ENCODE measurements at regions of chr1 and their contacts with region 1.

Region 1: GRCh38 chr1:25695090-25695770 is 78.6 kb downstream of the MAN1C1 start:
- DNase-seq: peak; percentile 88
- ATAC-seq: peak; percentile 89

Region 2: DNA sequence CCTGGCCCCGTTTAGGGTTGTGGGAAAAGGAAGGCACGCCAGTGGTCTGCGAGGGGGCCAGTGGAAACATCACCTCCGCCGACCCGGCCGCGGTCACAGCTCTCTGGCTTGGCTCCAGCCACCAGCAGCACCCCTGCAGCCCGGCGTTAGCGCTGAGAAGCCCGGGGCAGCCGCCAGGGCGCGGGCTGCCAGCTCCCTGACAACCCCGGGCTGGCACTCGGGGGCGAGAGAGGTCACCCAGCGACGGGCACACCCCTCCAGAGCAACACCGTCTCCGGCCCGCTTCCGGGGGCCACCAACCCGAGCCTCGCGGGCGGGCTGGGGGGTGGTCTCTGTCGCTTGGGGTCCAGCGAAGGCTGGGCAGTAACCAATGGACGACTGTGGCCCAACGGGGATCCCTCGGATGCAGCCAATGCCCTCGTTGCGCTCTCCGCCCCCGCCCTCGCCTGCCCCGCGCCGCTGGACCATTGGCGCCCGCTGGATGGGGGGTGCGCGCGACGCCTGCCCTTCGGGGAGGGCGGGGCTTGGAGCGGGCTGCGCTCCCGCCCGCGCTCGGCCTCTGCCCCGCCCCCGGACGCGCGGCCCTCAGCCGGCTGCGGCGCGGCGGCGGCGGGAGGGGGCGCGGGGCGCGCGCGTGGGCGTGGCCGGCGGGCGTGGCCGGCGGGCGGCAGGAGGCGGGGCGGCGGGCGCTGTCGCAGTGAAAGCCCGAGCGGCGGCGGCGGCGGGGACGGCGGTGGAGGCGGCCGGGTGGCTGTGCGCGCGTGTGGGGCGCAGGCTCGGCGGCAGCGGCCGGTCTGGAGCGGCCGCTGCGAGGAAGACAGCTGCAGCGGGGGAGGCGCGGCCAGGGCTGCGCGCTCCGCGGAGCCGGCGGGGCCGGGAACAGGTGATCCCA is 78.9 kb before region 1 on chr1 and contains the start of gene MAN1C1:
- intact Hi-C with region 1: loop called (anchors 1 kb)
- DNase-seq: peak; percentile 94
- ATAC-seq: peak; percentile 93
- total RNA-seq, gene MAN1C1: 19.5 TPM

Region 3: DNA sequence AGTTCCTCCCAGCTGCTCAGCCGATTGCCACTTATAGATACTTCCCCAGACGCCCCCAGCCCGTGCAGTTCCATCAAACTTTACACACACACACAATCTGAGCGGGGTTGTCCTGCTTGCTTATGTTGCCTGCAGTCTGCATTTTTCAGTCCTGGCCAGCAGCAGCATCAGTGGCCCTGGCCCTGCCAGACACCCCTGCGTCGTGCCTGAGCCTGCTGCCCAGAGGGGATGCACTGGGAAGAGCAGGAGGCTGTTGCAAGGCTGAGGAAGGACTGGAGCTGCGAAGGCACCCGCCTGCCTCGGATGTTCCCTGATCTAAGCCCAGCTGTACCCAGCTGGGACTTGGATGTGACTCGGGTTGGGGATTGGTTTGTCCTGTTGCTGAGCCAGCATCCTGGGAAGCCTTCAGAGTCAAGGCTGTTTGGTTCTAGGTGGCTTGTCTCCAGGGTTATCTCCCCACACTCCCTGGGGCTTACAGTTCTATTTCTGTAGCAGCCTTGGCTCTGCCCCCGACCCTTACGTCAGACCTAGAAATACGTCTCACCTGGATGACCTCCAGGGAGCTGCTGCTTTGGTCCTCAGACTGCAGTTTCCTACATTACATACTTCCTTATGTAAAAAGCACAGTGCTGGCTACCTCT is 36.3 kb before region 1 on chr1:
- intact Hi-C with region 1: loop called (anchors 5 kb)
- DNase-seq: peak; percentile 81
- ATAC-seq: peak; percentile 92

Region 4: GRCh38 chr1:25727635-25728330 is 32.6 kb after region 1 on chr1:
- intact Hi-C with region 1: loop called (anchors 2 kb)
- DNase-seq: peak; percentile 85
- ATAC-seq: peak; percentile 91

Region 5: GRCh38 chr1:25743826-25744581 is 48.8 kb after region 1 on chr1:
- intact Hi-C with region 1: loop called (anchors 1 kb)
- DNase-seq: peak; percentile 79
- ATAC-seq: peak; percentile 87

Region 6: DNA sequence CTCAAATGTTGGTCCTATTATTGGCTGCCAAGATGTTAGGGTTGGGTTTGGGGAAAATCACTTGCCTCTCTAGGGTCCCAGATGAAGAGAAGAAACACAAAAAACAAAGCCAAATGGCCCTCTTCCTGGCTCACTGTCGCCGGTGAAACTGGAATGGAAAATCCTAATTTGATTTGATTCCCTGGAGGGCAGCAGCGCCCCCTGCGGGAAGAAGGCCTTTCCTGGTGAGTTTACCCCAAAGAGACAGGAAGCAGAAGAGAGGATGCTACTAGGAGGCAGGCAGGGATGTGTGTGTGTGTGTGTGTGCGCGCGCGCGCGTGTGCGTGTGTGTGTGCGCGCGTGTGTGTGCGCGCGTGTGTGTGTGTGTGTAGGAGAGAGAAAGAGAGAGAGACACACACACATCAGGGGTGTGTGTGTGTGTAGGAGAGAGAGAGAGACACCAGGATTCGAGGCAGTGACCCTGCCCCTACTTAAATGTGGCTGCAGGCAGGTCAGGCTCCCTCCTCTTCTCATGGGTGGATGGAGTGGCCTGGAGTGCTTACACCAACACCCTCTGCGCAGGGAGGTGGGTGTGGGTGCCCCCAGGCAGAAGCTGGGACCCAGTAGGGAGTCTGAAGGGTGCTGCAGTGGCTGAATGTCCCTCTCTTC is 101.7 kb after region 1 on chr1:
- intact Hi-C with region 1: loop called (anchors 5 kb)
- DNase-seq: peak; percentile 86
- ATAC-seq: peak; percentile 23

Measured in Right ventricle myocardium inferior (tissue), 1 donor.